Right ventricle myocardium inferior (tissue), 1 donor: ENCODE measurements at regions of chr13 and their contacts with region 1.

Region 1: DNA sequence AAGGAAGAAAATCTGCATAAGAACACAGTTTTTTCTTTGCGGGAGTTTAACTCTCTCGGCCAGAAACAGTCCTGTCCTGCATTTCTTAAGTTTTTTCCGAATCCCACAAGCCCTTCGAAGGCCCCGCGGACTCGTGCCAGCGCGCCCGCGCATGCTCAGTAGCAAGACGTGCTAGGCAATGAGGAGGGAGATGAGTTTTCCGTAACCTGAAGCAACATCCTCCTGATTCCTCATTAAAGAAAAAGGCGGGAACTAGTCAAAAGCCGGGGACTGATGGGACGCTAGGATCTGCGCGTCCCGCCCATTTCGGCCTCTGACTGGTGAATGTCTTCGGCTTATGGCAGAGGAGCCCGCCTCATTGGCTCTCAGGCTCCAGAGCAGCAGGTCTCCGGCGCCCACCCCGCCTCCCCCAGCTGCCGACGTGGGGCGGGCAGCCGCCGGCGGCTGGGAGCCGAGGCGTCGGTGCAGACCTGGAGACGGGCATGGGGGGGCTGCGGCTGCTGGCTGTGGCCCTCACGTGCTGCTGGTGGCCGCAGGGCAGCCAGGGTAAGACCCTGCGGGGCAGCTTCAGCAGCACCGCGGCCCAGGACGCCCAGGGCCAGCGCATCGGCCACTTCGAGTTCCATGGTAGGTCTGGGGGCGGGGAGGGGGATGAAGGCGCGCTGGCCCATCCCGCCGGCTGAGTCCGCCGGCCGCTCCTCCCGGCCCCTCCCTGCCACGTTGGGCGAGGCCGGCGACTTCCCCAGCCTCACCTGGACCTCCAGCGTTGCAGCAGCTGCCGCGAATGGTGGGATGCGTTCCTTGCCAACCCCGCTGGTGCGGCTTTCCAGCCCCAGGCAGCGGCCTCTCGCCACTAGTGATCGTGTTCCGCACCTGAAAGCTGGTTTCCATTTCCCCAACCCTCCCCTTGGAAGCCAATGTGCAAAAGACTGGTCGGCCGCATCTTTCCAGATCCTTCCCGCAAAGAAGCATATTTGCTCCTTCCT is at the start of gene GPR180:
- DNase-seq: peak; percentile 98
- ATAC-seq: peak; percentile 100
- total RNA-seq, gene GPR180: 5.7 TPM

Region 2: DNA sequence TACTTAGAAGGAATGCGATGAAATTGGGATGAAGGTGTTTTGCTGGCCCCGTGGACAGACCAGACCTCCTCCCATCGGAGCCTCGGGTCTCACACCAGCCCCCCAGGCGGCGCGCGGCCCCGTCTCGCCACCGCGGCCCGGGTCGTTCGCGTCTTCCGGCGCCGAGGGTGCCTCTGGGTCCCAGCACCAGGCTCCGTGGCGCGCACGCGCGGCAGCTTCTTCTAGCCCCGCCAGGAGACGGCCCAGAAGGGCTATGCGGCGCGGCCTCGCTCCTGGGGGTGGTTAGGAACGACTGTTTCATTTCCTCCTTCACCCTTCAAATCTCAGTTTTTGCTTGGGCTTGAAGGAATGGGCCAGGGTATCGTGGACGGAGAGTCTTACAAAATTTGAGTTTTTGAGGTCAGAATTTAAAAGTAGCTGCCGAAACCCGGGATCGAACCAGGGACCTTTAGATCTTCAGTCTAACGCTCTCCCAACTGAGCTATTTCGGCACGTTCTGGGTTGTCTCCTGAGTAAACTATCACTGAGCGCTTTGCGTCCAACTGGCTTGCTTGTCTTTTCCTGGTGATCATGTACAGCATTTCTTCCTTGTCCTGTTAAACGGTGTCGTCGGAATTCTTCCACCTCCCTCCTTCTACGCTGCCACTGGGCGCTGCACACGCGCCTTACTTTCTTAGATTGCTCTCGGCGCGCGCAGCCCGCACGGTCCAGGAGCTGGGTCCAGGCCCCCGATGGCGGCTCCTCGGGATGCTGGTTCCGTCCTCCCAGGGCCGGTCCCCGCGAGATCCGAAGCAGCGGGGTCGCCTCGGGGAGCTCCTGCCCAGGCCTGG is 52.3 kb before region 1 on chr13:
- intact Hi-C with region 1: loop called (anchors 2 kb)
- DNase-seq: peak; percentile 96
- ATAC-seq: peak; percentile 97

Region 3: DNA sequence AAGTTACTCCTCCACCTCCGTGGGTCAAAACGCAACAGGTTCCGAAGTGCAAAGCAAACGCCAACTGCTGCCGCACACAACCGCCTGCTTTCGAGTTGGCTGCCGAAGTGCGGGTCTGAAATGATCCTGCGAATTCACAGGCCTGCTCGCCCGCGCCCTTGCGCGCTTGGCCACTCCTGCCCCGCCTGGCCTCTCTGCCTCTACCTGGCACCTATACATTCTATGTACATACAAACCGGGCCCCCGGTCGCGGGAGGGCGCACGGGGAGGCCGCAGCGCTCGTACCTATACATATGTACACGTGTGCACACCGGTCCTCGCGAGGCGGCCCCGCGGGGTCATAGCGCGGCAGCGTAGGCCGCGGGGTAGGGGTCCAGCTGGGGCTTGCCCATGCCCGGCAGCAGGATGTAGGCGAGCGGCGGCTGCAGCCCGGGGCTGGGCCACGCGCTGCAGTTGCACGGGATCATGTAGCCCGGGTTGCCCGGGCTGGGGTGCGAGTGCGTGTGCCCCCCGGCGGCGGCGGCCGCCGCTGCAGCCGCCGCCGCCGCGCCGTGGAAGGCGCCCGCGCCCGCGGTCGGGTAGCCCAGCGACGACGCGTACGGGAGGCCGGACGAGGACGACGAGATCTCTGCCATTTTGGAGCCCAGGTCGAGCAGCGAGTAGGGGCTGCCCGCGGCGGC is 109.3 kb after region 1 on chr13:
- intact Hi-C with region 1: no loop called
- DNase-seq: no peak
- ATAC-seq: no peak